CD8-positive, alpha-beta T cell (primary cell): ENCODE measurements at regions of chr15 and their contacts with region 1.

Region 1: DNA sequence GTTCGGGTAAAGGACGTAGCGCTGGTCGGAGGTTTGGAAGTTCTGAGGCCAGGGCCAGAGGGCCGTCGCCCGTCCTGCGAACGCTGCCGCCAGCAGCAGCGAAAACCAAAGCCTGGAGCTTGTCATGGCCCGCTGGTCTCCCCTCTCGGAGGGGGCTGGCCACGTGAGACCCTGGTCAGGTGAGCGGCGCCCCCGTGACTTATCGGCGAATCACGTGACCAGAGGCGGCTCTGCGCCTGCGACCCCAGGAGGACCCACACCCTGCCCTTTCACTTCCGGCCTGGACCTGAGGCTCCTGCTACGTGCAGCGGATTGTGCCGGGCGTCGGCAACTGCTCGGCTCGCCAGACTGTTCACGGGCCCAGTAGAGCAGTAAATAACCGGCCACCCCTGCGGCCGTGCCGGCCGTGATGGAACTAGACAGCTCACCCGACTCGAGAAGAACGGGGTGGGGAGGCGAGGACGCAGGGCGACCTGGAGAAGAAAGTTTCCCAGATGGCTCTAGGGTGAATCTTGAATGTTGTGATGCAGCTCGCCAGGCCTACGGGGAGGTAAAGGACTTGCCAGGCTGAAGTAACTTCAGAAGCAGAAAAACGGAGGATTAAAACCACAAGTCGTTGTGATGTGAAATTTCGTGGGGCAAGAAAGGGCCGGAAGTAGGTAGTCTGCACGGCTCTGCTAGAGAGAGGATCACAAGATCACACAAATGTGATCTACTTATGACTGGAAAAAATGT is at the start of gene HEXA:
- DNase-seq: peak; percentile 94 to 99 (median 97)
- ATAC-seq: peak; percentile 73
- H3K4me3 ChIP-seq: peak within 1 kb of the TSS; percentile 75 to 77
- H3K4me3 Mint-ChIP-seq: peak within 1 kb of the TSS; percentile 90
- H3K27ac ChIP-seq: peak within 1 kb of the TSS; percentile 83 to 90
- H3K27ac Mint-ChIP-seq: peak within 1 kb of the TSS; percentile 96
- H3K4me1 ChIP-seq: peaks cover 36% of the 10 kb centered on the region
- H3K4me1 Mint-ChIP-seq: peaks cover 56% of the 10 kb centered on the region
- H3K27me3 ChIP-seq: no peaks in the 10 kb centered on the region
- H3K27me3 Mint-ChIP-seq: no peaks in the 10 kb centered on the region
- CTCF ChIP-seq: no peak
- total RNA-seq, gene HEXA: 68.6 to 76.0 TPM

Region 2: GRCh38 chr15:72117486-72118399 is 258.3 kb before region 1 on chr15 and contains the start of gene MYO9A:
- CTCF ChIA-PET with region 1: no interaction called
- POLR2A ChIA-PET with region 1: no interaction called
- intact Hi-C with region 1: loop called in 1 of 2 experiments (anchors 5 kb)
- DNase-seq: peak; percentile 97 to 100 (median 99)
- ATAC-seq: peak; percentile 80
- H3K4me3 ChIP-seq: peak within 1 kb of the TSS; percentile 78 to 93
- H3K4me3 Mint-ChIP-seq: peak within 1 kb of the TSS; percentile 99
- H3K27ac ChIP-seq: peak within 1 kb of the TSS; percentile 95 to 97
- H3K27ac Mint-ChIP-seq: peak within 1 kb of the TSS; percentile 99
- H3K4me1 ChIP-seq: peaks cover 18% of the 10 kb centered on the region
- H3K4me1 Mint-ChIP-seq: peaks cover 45% of the 10 kb centered on the region
- H3K27me3 ChIP-seq: no peaks in the 10 kb centered on the region
- H3K27me3 Mint-ChIP-seq: no peaks in the 10 kb centered on the region
- CTCF ChIP-seq: no peak
- total RNA-seq, gene MYO9A: 15.1 to 20.0 TPM

Region 3: DNA sequence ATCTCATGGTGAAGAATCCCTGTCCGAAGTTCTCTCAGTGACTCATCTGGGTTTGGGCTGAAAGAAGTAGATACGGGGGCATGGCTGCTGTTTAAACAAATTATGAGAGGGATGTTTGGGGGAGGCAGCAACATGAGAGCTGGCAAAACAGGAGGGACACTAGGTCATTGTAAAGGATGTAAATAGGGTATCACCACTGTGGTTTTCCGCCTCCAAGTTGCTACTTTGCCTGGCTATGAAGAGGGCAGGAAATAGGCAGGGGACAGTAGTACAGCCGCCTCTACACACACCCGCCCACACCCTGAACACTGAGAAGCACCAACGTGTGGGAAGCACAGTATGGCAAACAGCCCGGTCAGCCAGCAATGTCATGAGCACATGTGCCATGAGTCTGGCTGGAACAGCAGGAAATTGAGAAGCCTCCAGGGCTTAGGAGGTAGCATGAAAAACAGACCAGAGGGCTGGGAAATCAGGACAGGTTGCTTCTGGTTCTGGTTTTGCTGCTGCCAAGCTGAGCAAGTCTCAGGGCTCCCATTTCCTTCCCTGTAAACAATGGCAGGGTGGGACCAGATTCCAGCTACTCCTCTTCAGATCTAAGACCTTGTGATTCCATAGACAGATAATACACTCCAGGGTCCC is 17.2 kb before region 1 on chr15:
- CTCF ChIA-PET with region 1: interaction called, 4 read pairs
- POLR2A ChIA-PET with region 1: interaction called, 11 read pairs
- intact Hi-C with region 1: no loop called
- DNase-seq: peak in 1 of 9 experiments; percentile 24
- ATAC-seq: no peak
- H3K4me3 ChIP-seq: no peak overlapping the region
- H3K4me3 Mint-ChIP-seq: no peak overlapping the region
- H3K27ac ChIP-seq: no peak overlapping the region
- H3K27ac Mint-ChIP-seq: no peak overlapping the region
- H3K4me1 ChIP-seq: no peaks in the 10 kb centered on the region
- H3K4me1 Mint-ChIP-seq: peaks cover 18% of the 10 kb centered on the region
- H3K27me3 ChIP-seq: no peaks in the 10 kb centered on the region
- H3K27me3 Mint-ChIP-seq: no peaks in the 10 kb centered on the region
- CTCF ChIP-seq: no peak

Region 4: DNA sequence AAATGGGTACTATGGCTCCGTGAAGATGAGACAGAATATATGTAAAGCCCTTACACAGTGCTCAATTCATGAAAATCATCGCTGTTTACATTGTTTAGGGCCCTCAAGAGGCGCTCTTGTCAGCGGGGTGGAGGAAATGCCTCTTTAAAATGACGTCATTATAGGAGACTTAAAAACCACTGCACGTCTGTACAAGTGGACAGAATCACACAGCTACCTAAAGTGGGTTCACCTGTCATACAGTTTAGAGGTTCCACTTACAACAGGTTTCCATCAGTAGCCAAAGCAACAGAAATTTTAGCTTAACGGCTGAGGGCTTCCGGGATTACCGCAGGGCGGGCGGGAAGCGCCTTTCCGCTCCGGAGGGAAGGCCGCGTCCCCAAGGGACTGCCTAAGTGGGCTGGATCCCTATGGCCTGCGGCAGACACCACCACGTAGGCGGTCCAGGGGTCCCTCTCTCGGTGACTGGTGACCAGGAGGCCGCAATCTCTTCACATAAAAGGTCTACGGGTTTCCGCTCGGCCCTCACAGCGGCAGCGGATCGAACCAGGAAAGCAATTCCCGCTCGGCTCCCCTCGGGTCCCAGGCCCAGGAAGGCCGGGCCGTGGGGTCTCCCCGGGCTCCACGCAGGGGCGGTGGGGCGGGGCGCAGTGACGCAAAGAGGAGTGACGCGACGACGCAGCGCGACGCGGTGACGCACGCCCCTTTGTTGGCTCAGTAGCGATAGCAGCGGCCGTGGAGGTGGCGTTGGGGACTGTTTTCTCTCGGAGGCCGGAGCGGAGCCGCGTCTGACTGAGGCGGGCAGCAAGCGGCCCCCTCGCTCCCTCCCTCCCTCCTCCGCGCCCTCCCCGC is 97.8 kb after region 1 on chr15 and contains the start of gene ARIH1:
- CTCF ChIA-PET with region 1: no interaction called
- POLR2A ChIA-PET with region 1: interaction called, 39 read pairs
- intact Hi-C with region 1: loop called (anchors 1 to 2 kb)
- DNase-seq: peak; percentile 95 to 99 (median 96)
- ATAC-seq: peak; percentile 72
- H3K4me3 ChIP-seq: peak within 1 kb of the TSS; percentile 93 to 100
- H3K4me3 Mint-ChIP-seq: peak within 1 kb of the TSS; percentile 97
- H3K27ac ChIP-seq: peak within 1 kb of the TSS; percentile 100
- H3K27ac Mint-ChIP-seq: peak within 1 kb of the TSS; percentile 99
- H3K4me1 ChIP-seq: peaks cover 46% of the 10 kb centered on the region
- H3K4me1 Mint-ChIP-seq: peaks cover 50% of the 10 kb centered on the region
- H3K27me3 ChIP-seq: no peaks in the 10 kb centered on the region
- H3K27me3 Mint-ChIP-seq: no peaks in the 10 kb centered on the region
- CTCF ChIP-seq: peak; percentile 42
- total RNA-seq, gene ARIH1: 343 to 351 TPM

Region 5: DNA sequence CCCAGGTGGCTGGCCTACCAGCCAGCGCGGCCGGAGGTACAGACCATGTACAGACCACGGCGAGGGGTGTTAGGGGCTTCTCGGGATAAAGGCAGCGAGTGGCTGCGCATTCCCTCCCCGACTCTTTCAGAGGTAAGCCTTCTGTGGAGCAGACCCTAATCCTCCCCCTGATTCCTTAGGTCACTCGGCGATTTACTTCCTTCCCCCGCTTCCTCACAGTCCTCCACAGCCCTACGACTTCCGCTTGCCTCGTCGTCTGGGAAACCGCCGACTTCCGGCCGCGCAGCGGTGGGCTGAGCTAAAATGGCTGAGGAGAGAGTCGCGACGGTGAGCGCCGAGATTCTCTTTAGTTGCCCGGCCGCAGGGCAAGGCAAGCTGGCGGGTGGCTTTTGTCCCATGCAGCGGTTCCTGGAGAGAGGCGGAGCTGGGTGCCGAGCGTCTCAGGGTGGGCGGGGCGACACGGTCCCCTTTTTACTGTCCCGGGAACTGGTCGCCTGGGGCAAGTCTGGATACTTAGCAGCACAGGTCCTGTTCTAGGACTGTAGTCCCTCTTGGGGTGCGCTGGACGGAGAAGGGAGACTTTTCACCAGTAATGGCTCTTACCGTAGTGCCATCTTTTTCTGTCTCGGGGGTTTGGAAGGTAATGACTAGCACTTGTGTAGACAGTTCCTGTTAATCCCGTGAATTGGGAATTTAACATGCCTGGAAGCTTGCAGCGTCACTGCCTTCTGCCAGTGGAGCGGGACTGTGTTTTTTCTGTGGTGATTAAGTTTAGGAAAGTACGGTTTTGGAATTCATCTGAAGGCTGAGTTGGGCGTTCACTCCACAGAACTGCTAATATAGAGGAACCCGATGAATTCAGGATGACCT is 310.1 kb after region 1 on chr15 and contains the starts of genes BBS4 and HIGD2B:
- CTCF ChIA-PET with region 1: no interaction called
- POLR2A ChIA-PET with region 1: no interaction called
- intact Hi-C with region 1: loop called (anchors 5 to 10 kb)
- DNase-seq: peak; percentile 68 to 93 (median 86)
- ATAC-seq: peak; percentile 92
- H3K4me3 ChIP-seq: peak within 1 kb of the TSS; percentile 73 to 87
- H3K4me3 Mint-ChIP-seq: peak within 1 kb of the TSS; percentile 97
- H3K27ac ChIP-seq: peak within 1 kb of the TSS; percentile 86 to 90
- H3K27ac Mint-ChIP-seq: peak within 1 kb of the TSS; percentile 96
- H3K4me1 ChIP-seq: peaks cover 14% of the 10 kb centered on the region
- H3K4me1 Mint-ChIP-seq: peaks cover 18% of the 10 kb centered on the region
- H3K27me3 ChIP-seq: no peaks in the 10 kb centered on the region
- H3K27me3 Mint-ChIP-seq: no peaks in the 10 kb centered on the region
- CTCF ChIP-seq: no peak
- total RNA-seq, gene BBS4: 8.8 to 12.9 TPM
- total RNA-seq, gene HIGD2B: 0.27 TPM in 1 of 2 experiments, not detected in the other

Region 6: GRCh38 chr15:73684581-73685455 is 1308.8 kb after region 1 on chr15:
- CTCF ChIA-PET with region 1: no interaction called
- POLR2A ChIA-PET with region 1: no interaction called
- intact Hi-C with region 1: no loop called
- DNase-seq: no peak
- ATAC-seq: no peak
- H3K4me3 ChIP-seq: no peak overlapping the region
- H3K4me3 Mint-ChIP-seq: peak overlapping the region; percentile 45
- H3K27ac ChIP-seq: no peak overlapping the region
- H3K27ac Mint-ChIP-seq: no peak overlapping the region
- H3K4me1 ChIP-seq: peaks cover 13% of the 10 kb centered on the region
- H3K4me1 Mint-ChIP-seq: peaks cover 8% of the 10 kb centered on the region
- H3K27me3 ChIP-seq: peaks cover 21 to 24% of the 10 kb centered on the region in 2 experiments
- H3K27me3 Mint-ChIP-seq: peaks cover 61% of the 10 kb centered on the region
- CTCF ChIP-seq: no peak